ENCODE measurements at regions of chr3 and their contacts with region 1.

Region 1: GRCh38 chr3:23999012-23999641 is 54.0 kb downstream of the NR1D2 start:
- DNase-seq: peak; percentile 62
- H3K4me3 ChIP-seq: no peak overlapping the region
- H3K27ac ChIP-seq: no peak overlapping the region
- H3K4me1 ChIP-seq: no peaks in the 10 kb centered on the region
- CTCF ChIP-seq: peak; percentile 100

Region 2: GRCh38 chr3:23894254-23895061 is 104.7 kb before region 1 on chr3:
- CTCF ChIA-PET with region 1: interaction called, 4 read pairs
- POLR2A ChIA-PET with region 1: interaction called, 4 read pairs
- intact Hi-C with region 1: loop called (anchors 5 kb)
- DNase-seq: no peak
- H3K4me3 ChIP-seq: no peak overlapping the region
- H3K27ac ChIP-seq: no peak overlapping the region
- H3K4me1 ChIP-seq: no peaks in the 10 kb centered on the region
- CTCF ChIP-seq: no peak

Region 3: DNA sequence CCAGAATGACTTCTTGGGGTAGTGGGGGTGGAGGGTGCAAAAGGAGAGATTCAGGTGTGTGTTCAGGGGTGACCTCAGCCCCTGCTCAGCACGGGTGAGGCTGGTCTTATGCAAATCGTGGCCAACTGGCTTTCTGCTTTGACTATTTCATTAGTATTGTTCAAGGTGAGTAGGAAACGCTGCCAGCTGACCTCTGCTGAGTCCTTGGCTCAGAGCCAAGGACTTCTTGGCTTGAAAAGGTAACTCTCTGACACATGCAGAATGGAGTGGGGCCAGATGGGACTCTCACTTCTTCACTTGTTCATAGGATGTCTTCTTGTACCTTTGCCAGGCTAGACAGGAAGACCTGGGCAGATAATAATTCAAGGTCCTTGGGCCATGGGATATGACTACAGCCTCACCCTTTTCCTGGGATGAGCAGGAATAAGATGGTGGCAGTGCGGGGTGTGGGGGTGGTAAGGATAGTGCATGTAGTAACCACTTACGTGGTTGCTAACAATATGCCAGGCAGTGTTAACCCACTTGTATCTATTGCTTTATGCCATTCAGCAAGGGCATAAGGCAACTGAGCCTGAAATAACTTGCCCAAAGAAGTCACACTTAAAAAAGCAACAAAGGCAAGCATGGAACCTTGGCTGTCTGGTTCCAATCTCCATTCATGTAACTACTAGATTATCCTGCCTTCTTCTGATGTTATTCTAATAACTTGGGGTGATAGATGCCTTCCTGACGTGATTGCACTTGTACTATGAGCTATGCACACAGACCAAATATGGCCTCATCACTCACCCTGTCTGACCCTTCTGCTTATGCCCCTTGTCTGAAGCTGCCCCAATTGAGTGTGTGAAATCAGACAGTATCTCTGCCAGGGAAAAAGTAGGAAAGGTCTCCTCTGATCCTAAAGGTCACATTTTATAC is 139.1 kb after region 1 on chr3:
- CTCF ChIA-PET with region 1: no interaction called
- POLR2A ChIA-PET with region 1: no interaction called
- intact Hi-C with region 1: loop called (anchors 5 kb)
- DNase-seq: peak; percentile 76
- H3K4me3 ChIP-seq: no peak overlapping the region
- H3K27ac ChIP-seq: peak overlapping the region; percentile 41
- H3K4me1 ChIP-seq: peaks cover 32% of the 10 kb centered on the region
- CTCF ChIP-seq: no peak

Region 4: GRCh38 chr3:24220859-24221657 is 221.9 kb after region 1 on chr3:
- CTCF ChIA-PET with region 1: no interaction called
- POLR2A ChIA-PET with region 1: no interaction called
- intact Hi-C with region 1: no loop called
- DNase-seq: no peak
- H3K4me3 ChIP-seq: no peak overlapping the region
- H3K27ac ChIP-seq: no peak overlapping the region
- H3K4me1 ChIP-seq: no peaks in the 10 kb centered on the region
- CTCF ChIP-seq: no peak

Region 5: DNA sequence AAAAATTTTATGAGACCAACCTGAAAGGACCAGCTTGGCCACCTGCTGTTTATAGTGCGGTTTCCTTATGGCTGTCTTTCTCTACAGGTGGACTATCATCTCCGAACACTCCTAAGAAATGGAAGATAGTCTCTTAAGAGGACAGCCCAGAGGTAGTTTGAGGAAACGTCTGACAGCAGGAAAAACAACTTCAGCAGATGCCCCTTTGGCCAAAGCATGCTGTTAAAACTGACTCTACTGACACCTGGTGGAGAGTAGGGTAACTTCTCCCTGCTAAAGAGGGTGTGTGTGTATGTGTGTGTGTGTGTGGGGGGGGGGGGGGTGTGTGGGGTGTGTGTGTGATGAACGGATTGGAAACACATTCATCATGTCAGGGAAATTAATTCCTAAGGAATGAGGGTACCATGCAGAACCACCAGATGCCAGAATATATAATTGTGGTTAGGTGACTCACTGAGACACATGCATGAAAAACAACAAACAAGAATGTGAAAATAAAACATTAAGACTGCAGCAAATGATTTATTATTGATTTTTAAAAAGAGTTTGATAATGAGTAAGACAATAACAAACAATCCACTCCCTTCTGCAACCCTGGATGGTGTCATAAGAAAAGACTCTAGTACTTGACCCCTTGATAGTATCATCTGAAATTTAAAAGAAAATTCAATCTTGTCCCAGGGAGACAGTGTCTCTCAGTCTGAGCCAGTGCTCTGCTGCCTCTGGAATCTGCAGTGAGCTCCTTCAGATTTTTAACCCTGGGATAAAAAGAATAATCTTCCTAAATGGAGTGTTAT is 239.0 kb after region 1 on chr3:
- CTCF ChIA-PET with region 1: no interaction called
- POLR2A ChIA-PET with region 1: interaction called, 3 read pairs
- intact Hi-C with region 1: loop called (anchors 1 kb)
- DNase-seq: peak; percentile 75
- H3K4me3 ChIP-seq: no peak overlapping the region
- H3K27ac ChIP-seq: no peak overlapping the region
- H3K4me1 ChIP-seq: no peaks in the 10 kb centered on the region
- CTCF ChIP-seq: peak; percentile 84

Measured in OCI-LY7 (cell line).